B cell (primary cell): ENCODE measurements at regions of chr17 and their contacts with region 1.

Region 1: GRCh38 chr17:5364156-5364555 is 55.3 kb downstream of the NUP88 start:
- DNase-seq: no peak
- ATAC-seq: no peak
- H3K4me3 ChIP-seq: no peak overlapping the region
- H3K4me3 Mint-ChIP-seq: no peak overlapping the region
- H3K27ac ChIP-seq: peak overlapping the region in 1 of 2 donors; percentile 38
- H3K27ac Mint-ChIP-seq: no peak overlapping the region
- H3K4me1 ChIP-seq: no peaks in the 10 kb centered on the region
- H3K4me1 Mint-ChIP-seq: no peaks in the 10 kb centered on the region
- H3K27me3 ChIP-seq: no peaks in the 10 kb centered on the region
- H3K27me3 Mint-ChIP-seq: no peaks in the 10 kb centered on the region
- CTCF ChIP-seq: no peak

Region 2: GRCh38 chr17:5419356-5419958 is 55.3 kb after region 1 on chr17 and contains the start of gene NUP88:
- CTCF ChIA-PET with region 1: no interaction called
- POLR2A ChIA-PET with region 1: no interaction called
- intact Hi-C with region 1: loop called (anchors 10 kb)
- DNase-seq: peak; percentile 98
- ATAC-seq: peak; percentile 83
- H3K4me3 ChIP-seq: peak within 1 kb of the TSS; percentile 93 to 100 (median 99)
- H3K4me3 Mint-ChIP-seq: peak within 1 kb of the TSS; percentile 94
- H3K27ac ChIP-seq: peak within 1 kb of the TSS; percentile 98 to 100
- H3K27ac Mint-ChIP-seq: peak within 1 kb of the TSS; percentile 99
- H3K4me1 ChIP-seq: peaks cover 25 to 35% of the 10 kb centered on the region in 2 donors
- H3K4me1 Mint-ChIP-seq: peaks cover 49% of the 10 kb centered on the region
- H3K27me3 ChIP-seq: no peaks in the 10 kb centered on the region
- H3K27me3 Mint-ChIP-seq: no peaks in the 10 kb centered on the region
- CTCF ChIP-seq: no peak
- total RNA-seq, gene NUP88: 221 and 238 TPM in 2 replicates

Region 3: DNA sequence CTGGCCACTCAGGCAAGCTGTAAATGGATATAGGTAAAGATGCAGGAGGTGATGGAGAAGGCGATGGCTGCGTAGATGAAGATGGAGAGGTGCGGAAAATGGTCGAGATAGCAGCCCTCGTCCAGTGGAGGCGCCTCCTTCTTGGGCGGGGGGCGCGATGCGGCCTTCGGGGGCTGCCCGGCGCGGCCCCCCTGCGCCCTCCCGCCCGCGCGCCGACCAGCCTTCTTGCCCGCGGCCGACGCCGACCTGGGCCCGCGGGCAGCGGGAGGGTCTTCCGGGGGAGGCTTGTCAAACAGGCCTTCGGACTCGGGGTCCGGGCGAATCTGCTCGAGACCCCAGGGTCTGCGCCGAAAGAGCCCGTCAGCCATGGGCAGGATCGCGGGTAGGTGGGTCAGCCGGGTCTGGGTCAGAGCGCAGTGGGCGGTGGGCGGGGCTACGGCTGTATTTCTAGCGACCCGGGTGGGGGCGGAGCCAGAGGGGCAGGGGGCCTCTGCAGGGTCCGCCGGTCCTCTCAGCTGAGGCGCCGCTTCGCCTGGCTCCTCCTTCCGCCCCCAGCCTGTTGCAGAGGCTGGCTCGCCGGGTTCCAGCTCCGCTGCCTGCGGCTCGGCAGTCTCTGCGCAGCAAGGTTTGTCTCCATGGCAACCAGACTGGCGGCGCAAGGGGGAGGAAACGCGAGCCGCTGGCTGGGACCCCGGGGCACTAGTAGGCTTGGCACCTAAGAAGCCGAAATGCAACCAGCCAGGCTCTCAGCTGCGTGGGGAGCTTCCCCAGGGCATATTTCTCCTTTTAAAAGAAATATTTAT is 136.6 kb after region 1 on chr17:
- CTCF ChIA-PET with region 1: no interaction called
- POLR2A ChIA-PET with region 1: no interaction called
- intact Hi-C with region 1: no loop called
- DNase-seq: peak; percentile 85
- ATAC-seq: peak; percentile 92
- H3K4me3 ChIP-seq: peak overlapping the region in 4 of 5 experiments; percentile 43 to 71 (median 61)
- H3K4me3 Mint-ChIP-seq: peak overlapping the region; percentile 98
- H3K27ac ChIP-seq: no peak overlapping the region
- H3K27ac Mint-ChIP-seq: peak overlapping the region; percentile 75
- H3K4me1 ChIP-seq: peaks cover 10 to 22% of the 10 kb centered on the region in 2 donors
- H3K4me1 Mint-ChIP-seq: peaks cover 25% of the 10 kb centered on the region
- H3K27me3 ChIP-seq: peaks cover 0 to 6% (median 3%) of the 10 kb centered on the region in 4 experiments
- H3K27me3 Mint-ChIP-seq: peaks cover under 1% of the 10 kb centered on the region
- CTCF ChIP-seq: no peak